ENCODE measurements at regions of chr2 and their contacts with region 1.

Region 1: DNA sequence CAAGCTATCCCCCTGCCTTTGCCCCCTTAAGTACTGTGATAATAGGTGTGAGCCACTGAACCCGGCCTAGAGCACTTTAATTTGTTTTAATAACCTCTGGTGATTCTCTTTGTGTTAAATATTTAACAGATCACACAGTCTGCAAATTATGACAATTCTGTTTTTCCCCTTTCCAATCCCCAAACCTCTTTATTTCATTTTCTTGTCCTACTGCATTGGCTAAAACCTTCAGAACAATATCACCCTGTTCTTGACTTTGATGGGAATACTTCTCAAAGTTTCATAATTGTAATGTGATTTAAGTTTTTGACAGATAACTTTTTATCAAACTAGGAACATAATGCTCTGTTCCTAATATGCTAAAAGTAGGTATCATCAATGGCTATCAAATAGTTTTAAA is 44.5 kb downstream of the USP37 start:
- DNase-seq: no peak
- ATAC-seq: no peak

Region 2: GRCh38 chr2:217412721-217413120 is 1110.9 kb before region 1 on chr2:
- intact Hi-C with region 1: loop called (anchors 5 kb)
- DNase-seq: no peak
- ATAC-seq: peak; percentile 62